ENCODE measurements at regions of chr20 and their contacts with region 1.

Region 1: DNA sequence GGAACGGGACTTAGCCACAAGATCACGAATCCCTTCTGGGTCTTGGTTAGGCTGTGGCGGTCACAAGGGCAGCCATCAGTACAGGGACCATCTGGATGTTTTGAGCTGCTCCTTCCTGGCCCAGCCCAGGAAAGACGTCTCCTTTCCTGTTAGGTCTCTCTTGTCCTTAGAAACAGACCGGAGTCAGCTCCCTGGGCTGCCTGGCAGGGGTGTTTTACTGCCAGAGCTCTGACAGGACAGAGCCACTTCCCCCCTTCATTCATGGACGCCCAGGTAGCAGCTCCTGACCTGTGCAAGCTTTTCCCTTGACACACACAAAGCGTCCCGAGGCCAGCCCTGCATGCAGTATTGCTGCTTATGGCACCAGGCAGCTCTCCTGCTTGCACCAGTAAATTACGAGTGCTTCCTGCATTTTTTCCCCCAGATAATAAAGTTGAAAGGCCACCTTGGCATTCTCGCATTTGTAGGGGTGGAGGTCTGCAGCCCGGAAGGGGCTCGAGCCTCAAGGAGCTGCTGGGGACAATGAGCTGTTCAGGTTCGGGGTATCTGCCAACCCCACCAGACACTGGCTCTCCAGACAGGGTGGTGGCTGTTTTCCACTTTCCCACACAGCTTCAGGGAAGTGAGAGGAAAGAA is 87.4 kb downstream of the NOL4L start:
- DNase-seq: no peak
- ATAC-seq: no peak
- H3K4me3 ChIP-seq: no peak overlapping the region
- H3K27ac ChIP-seq: no peak overlapping the region
- H3K4me1 ChIP-seq: peaks cover 13% of the 10 kb centered on the region
- H3K27me3 ChIP-seq: no peaks in the 10 kb centered on the region
- CTCF ChIP-seq: no peak

Region 2: DNA sequence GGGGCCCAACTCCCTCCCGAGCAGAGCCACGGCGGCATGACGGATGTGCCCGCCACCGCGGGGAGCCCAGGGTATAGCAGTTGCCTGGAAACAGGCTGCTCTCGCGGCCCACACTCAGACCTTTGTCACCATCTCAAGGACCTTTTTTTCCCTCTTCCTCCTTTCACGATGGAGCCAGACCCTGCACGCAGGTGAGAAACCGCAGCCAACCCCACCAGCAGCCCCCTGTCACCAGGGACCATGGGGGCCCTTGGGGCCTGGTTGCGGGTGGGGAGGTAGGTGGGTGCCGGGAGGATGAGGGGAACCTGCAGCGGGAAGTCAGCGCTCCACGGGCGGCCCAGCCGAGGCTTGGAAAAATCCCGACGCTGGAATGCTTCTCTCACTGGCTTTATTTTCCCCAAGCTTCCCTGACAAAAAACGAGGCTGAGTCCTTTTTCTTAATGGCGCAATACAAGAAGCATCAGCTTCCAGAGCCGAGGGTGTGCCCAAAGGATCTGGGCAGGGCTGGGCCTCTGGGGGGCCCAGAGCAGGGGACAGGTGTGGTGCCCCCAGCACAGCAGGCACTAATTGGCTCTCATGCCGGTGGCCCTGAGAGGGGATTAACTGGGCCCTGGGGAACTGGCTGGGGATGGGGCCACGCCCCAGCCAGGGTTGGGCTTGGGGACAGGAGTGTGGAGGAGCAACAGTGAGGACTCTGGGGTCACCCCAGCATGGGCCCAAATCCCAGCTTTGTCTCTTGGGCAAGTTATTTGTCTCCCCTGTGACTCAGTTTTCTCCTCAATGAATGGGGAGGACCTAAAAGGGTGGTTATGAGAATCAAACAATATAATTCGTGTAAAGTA is 63.5 kb after region 1 on chr20:
- CTCF ChIA-PET with region 1: no interaction called
- POLR2A ChIA-PET with region 1: no interaction called
- intact Hi-C with region 1: no loop called
- DNase-seq: no peak
- ATAC-seq: no peak
- H3K4me3 ChIP-seq: no peak overlapping the region
- H3K27ac ChIP-seq: no peak overlapping the region
- H3K4me1 ChIP-seq: no peaks in the 10 kb centered on the region
- H3K27me3 ChIP-seq: no peaks in the 10 kb centered on the region
- CTCF ChIP-seq: no peak

Region 3: GRCh38 chr20:32819992-32820710 is 322.4 kb after region 1 on chr20:
- CTCF ChIA-PET with region 1: no interaction called
- POLR2A ChIA-PET with region 1: interaction called, 11 read pairs
- intact Hi-C with region 1: no loop called
- DNase-seq: peak; percentile 71
- ATAC-seq: peak; percentile 81
- H3K4me3 ChIP-seq: peak overlapping the region; percentile 99
- H3K27ac ChIP-seq: peak overlapping the region; percentile 49
- H3K4me1 ChIP-seq: peaks cover 30% of the 10 kb centered on the region
- H3K27me3 ChIP-seq: no peaks in the 10 kb centered on the region
- CTCF ChIP-seq: no peak

Measured in PC-3 (cell line).